HCT116 (cell line): ENCODE measurements at regions of chr19 and their contacts with region 1.

Region 1: DNA sequence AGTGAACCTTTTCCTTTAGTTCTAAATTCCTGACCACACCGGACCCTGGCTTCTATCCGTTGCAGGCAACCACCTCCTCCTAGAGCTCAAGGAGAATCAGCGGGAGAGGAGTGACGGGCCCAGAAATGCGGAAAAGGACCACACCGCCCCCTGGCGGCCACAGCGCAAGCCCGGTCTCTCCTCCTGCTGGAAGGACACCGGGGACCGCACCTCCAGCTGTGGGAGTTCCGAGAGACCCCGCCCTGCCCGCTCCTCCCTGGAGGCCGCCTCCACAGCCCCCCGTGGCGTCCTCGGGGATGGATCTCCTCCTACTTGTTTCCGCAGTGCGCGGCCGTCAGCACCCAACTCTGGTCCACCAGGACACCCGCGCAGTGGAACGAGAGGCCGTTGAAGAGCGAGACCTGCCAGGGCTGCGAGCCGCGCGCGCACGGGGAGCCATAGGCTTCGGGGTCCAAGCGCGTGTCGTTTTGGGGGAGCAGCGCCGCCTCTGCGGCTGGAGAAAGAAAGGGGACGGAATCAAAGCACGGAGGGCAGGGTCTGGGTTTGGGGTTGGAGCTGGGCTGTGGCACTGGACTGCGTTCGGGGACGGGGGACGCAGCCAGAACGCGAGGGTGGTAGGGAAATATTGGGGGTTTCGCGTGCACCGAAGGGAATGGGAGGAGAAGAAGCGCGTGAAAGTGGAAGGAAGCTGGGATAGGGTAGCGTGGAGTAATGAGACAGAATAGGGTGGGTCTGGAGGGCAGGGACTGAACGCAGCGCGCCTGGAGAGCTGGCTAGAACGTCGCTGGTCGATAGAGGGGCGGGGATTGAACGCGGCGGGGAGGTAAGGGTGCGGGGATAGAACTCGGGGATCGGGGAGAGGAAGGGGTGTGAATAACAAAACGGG is 2.5 kb downstream of the KLK10 start:
- DNase-seq: peak; percentile 83
- ATAC-seq: peak; percentile 72
- H3K4me3 ChIP-seq: peak overlapping the region; percentile 60 to 73
- H3K27ac ChIP-seq: peak overlapping the region; percentile 79
- H3K4me1 ChIP-seq: peaks cover 18 to 67% of the 10 kb centered on the region in 2 experiments
- H3K27me3 ChIP-seq: no peaks in the 10 kb centered on the region
- CTCF ChIP-seq: peak; percentile 92 to 96 (median 95)
- POLR2A ChIP-seq: no peak
- RAD21 ChIP-seq: peak; percentile 97

Region 2: GRCh38 chr19:50909240-50910070 is 107.6 kb before region 1 on chr19:
- CTCF ChIA-PET with region 1: interaction called, 5 read pairs
- POLR2A ChIA-PET with region 1: no interaction called
- RAD21 ChIA-PET with region 1: interaction called, 3 read pairs
- intact Hi-C with region 1: loop called (anchors 1 kb)
- DNase-seq: peak; percentile 85
- ATAC-seq: peak; percentile 97
- H3K4me3 ChIP-seq: peak overlapping the region; percentile 27 to 55
- H3K27ac ChIP-seq: no peak overlapping the region
- H3K4me1 ChIP-seq: peaks cover 4 to 26% of the 10 kb centered on the region in 2 experiments; a peak in 3 of 4 replicates
- H3K27me3 ChIP-seq: peaks cover 9% of the 10 kb centered on the region
- CTCF ChIP-seq: no peak
- POLR2A ChIP-seq: no peak
- RAD21 ChIP-seq: no peak

Region 3: GRCh38 chr19:50933640-50934039 is 83.4 kb before region 1 on chr19:
- CTCF ChIA-PET with region 1: interaction called, 62 read pairs
- POLR2A ChIA-PET with region 1: interaction called, 8 read pairs
- RAD21 ChIA-PET with region 1: interaction called, 5 to 8 read pairs
- intact Hi-C with region 1: loop called (anchors 1 kb)
- DNase-seq: no peak
- ATAC-seq: no peak
- H3K4me3 ChIP-seq: peak overlapping the region in 1 of 2 experiments; percentile 1; a peak in 1 of 4 replicates
- H3K27ac ChIP-seq: peak overlapping the region; percentile 78
- H3K4me1 ChIP-seq: peaks cover 47 to 54% of the 10 kb centered on the region in 2 experiments
- H3K27me3 ChIP-seq: no peaks in the 10 kb centered on the region
- CTCF ChIP-seq: no peak
- POLR2A ChIP-seq: no peak
- RAD21 ChIP-seq: 0 out of 2 replicates have a peak, but pooled peaks have one; percentile 5

Region 4: DNA sequence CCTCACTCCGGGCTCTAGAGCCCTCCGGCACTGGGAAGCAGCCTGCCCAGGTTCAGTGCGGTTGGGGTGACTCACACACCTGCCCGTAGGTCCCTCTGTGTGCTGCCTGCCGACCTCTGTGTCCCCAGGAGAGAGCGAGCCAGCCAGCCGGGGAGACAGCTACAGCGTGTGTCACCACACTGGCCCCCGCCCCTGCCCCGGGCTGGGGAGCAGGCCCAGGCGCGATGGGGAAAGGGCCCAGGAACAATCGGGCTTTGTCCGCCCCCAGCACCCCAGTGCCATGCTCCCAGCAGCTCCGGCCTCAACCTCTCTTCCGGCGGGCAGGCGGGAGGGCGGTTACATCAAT is 47.7 kb before region 1 on chr19 and contains the start of gene KLK6:
- CTCF ChIA-PET with region 1: interaction called, 3 read pairs
- POLR2A ChIA-PET with region 1: interaction called, 8 read pairs
- RAD21 ChIA-PET with region 1: interaction called in 1 of 2 experiments, 9 read pairs
- intact Hi-C with region 1: loop called (anchors 2 kb)
- DNase-seq: peak; percentile 76
- ATAC-seq: peak; percentile 91
- H3K4me3 ChIP-seq: peak within 1 kb of the TSS; percentile 37 to 53
- H3K27ac ChIP-seq: peak within 1 kb of the TSS; percentile 95
- H3K4me1 ChIP-seq: peaks cover 42 to 86% of the 10 kb centered on the region in 2 experiments
- H3K27me3 ChIP-seq: no peaks in the 10 kb centered on the region
- CTCF ChIP-seq: no peak
- POLR2A ChIP-seq: no peak
- RAD21 ChIP-seq: no peak; the same call in 1 of the 2 replicates
- total RNA-seq, gene KLK6: 40.5 TPM

Region 5: GRCh38 chr19:51002542-51003171 is 14.4 kb before region 1 on chr19:
- CTCF ChIA-PET with region 1: interaction called, 71 read pairs
- POLR2A ChIA-PET with region 1: interaction called, 49 read pairs
- RAD21 ChIA-PET with region 1: interaction called in 1 of 2 experiments, 14 read pairs
- intact Hi-C with region 1: no loop called
- DNase-seq: peak; percentile 99
- ATAC-seq: peak; percentile 86
- H3K4me3 ChIP-seq: peak overlapping the region; percentile 78 to 88
- H3K27ac ChIP-seq: peak overlapping the region; percentile 77
- H3K4me1 ChIP-seq: peaks cover 16 to 36% of the 10 kb centered on the region in 2 experiments
- H3K27me3 ChIP-seq: no peaks in the 10 kb centered on the region
- CTCF ChIP-seq: no peak
- POLR2A ChIP-seq: no peak
- RAD21 ChIP-seq: no peak

Region 6: DNA sequence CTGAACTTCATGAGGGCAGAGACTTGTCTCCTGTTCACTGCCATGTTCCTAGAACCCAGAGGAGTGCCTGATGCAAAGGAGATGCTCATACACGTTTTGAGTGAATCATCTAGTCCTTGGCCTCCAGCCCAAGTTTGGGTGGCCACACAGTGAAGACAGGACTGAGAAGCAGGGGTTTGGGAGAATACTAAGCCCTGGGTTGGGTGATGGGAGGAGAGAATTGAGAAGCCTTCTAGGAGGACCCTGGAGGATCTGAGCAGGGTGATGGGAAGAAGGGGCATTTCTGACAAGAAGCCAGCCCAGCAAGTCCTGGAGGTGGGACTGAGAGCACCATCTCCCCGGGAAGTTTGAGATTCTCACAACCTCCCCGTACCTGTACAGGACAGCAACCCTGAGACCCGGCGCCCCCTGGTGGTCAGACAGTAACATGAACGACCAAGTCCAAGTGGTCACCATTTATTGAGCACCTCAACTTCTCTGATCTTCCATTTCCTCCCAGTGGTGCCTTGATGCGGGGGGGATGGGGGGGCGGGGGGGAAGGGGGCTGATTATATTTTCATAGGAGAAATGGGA is 80.2 kb after region 1 on chr19:
- CTCF ChIA-PET with region 1: interaction called, 140 read pairs
- POLR2A ChIA-PET with region 1: interaction called, 7 read pairs
- RAD21 ChIA-PET with region 1: interaction called, 5 to 10 read pairs
- intact Hi-C with region 1: loop called (anchors 1 kb)
- DNase-seq: peak; percentile 31
- ATAC-seq: peak; percentile 87
- H3K4me3 ChIP-seq: no peak overlapping the region
- H3K27ac ChIP-seq: no peak overlapping the region
- H3K4me1 ChIP-seq: peaks cover under 1 to 6% of the 10 kb centered on the region in 2 experiments; a peak in 2 of 4 replicates
- H3K27me3 ChIP-seq: no peaks in the 10 kb centered on the region
- CTCF ChIP-seq: peak; percentile 36 to 78 (median 65); a peak in 5 of 6 replicates
- POLR2A ChIP-seq: no peak
- RAD21 ChIP-seq: peak; percentile 60

Region 7: GRCh38 chr19:51131780-51132680 is 115.0 kb after region 1 on chr19:
- CTCF ChIA-PET with region 1: no interaction called
- POLR2A ChIA-PET with region 1: no interaction called
- RAD21 ChIA-PET with region 1: no interaction called
- intact Hi-C with region 1: no loop called
- DNase-seq: peak; percentile 10
- ATAC-seq: peak; percentile 67
- H3K4me3 ChIP-seq: no peak overlapping the region
- H3K27ac ChIP-seq: no peak overlapping the region
- H3K4me1 ChIP-seq: peaks cover 2 to 7% of the 10 kb centered on the region in 2 experiments; a peak in 1 of 4 replicates
- H3K27me3 ChIP-seq: 0 out of 2 replicates have a peak, but pooled peaks cover 3% of the 10 kb centered on the region
- CTCF ChIP-seq: peak in 2 of 3 experiments; percentile 14; a peak in 2 of 6 replicates
- POLR2A ChIP-seq: no peak
- RAD21 ChIP-seq: 0 out of 2 replicates have a peak, but pooled peaks have one; percentile 10

Region 8: GRCh38 chr19:51179256-51179655 is 162.2 kb after region 1 on chr19:
- CTCF ChIA-PET with region 1: no interaction called
- POLR2A ChIA-PET with region 1: no interaction called
- RAD21 ChIA-PET with region 1: no interaction called
- intact Hi-C with region 1: no loop called
- DNase-seq: no peak
- ATAC-seq: no peak
- H3K4me3 ChIP-seq: no peak overlapping the region
- H3K27ac ChIP-seq: no peak overlapping the region
- H3K4me1 ChIP-seq: no peaks in the 10 kb centered on the region
- H3K27me3 ChIP-seq: peaks cover 32% of the 10 kb centered on the region
- CTCF ChIP-seq: no peak
- POLR2A ChIP-seq: no peak
- RAD21 ChIP-seq: no peak

Region 9: DNA sequence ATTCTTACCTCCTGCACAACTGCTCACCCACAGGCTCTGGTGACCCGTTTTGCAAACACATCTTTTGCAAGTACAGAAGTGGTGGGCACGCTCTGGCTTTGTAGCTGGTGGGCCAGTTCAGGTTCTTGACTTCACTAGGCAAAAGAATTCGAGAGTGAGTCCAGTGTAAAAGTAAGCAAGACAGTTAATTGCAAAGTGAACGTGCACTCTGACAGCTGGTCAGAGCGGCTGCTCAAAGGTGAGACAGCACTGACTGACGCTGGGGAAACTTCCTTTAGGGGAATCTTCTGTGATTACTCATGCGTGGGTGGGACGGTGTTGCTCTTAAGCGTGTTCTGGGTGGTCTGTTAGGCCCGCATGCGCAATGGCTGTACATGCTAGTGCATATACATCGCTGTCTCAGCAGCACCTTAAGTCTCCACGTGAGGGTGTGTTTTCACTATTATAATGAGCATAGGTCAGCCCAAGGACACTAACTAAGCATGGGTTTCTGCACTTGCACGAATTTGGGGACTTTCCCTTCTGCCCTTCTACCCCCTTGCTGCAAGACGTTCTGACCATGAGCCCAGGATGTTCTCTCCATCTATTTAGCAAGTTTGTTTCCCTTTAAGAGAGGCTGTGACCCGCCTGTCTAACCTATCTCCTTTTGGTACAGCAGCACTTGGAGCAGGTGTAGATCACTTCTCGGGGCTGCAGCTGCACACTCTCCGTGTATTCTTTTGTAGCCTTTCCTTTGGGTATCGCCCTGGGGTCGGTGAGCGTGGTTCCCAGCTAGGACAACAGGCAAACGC is 177.7 kb after region 1 on chr19:
- CTCF ChIA-PET with region 1: no interaction called
- POLR2A ChIA-PET with region 1: no interaction called
- RAD21 ChIA-PET with region 1: no interaction called
- intact Hi-C with region 1: no loop called
- DNase-seq: no peak
- ATAC-seq: peak; percentile 84
- H3K4me3 ChIP-seq: peak overlapping the region in 1 of 2 experiments; percentile 13; a peak in 2 of 4 replicates
- H3K27ac ChIP-seq: no peak overlapping the region
- H3K4me1 ChIP-seq: peaks cover 9 to 14% of the 10 kb centered on the region in 2 experiments; a peak in 3 of 4 replicates
- H3K27me3 ChIP-seq: no peaks in the 10 kb centered on the region
- CTCF ChIP-seq: no peak
- POLR2A ChIP-seq: no peak
- RAD21 ChIP-seq: no peak

Region 10: DNA sequence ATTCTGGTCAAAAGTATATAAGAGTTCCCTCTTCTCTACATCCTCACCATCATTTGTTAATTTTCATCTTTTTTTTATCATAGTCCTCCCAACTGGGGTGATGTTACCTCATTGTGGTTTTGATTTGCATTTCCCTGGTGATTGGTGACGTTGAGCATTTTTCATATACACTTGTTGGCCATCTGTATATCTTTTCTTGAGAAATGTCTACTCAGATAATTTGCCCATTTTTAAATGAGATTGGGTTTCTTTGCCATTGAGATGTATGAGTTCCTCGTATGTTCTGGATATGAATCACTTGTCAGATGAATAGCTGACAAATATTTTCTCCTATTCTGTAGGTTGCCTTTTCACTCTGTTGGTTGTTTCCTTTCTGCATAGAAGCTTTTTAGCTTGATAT is 210.3 kb after region 1 on chr19:
- CTCF ChIA-PET with region 1: no interaction called
- POLR2A ChIA-PET with region 1: no interaction called
- RAD21 ChIA-PET with region 1: no interaction called
- intact Hi-C with region 1: no loop called
- DNase-seq: no peak
- ATAC-seq: no peak
- H3K4me3 ChIP-seq: no peak overlapping the region
- H3K27ac ChIP-seq: no peak overlapping the region
- H3K4me1 ChIP-seq: no peaks in the 10 kb centered on the region
- H3K27me3 ChIP-seq: no peaks in the 10 kb centered on the region
- CTCF ChIP-seq: no peak
- POLR2A ChIP-seq: no peak
- RAD21 ChIP-seq: no peak